H1 (cell line): ENCODE measurements at regions of chr2 and their contacts with region 1.

Region 1: DNA sequence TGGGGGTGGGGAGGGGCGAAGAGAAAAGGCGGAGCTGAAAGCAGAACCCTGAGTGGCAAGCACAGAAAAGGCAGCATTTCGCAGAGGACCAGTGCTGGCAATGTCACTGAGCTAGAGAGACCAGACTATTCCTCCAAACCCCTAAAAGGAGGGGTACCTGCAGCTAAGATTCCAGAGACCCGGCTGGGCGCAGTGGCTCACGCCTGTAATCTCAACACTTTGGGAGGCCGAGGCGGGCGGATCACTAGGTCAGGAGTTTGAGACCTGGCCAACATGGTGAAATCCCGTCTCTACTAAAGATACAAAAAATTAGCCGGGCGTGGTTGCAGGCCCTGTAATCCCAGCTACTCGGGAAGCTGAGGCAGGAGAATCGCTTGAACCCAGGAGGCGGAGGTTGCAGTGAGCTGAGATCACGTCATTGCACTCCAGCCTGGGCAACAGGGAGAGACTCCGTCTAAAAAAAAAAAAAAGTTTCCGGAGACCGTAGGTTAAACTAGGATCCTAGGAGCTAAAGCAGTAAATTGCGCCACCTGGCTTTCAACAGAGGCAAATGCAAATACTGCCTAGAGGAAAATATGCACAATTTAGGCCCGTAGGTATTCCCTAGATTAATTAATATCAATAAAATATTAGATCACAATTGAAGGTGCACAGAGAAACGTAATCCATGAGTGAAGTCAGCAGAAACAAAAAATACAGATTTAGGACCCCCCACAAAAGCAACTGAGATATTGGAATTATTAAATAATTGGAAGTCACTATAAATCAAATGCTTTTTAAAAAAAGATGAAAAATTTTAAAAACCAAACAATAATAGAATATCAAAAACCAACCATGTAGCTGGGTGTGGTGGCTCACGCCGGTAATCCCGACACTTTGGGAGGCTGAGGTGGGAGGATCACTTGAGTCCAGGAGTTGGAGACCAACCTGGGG is 4.9 kb downstream of the UCN start:
- DNase-seq: peak in 1 of 2 experiments; percentile 64
- H3K4me3 ChIP-seq: peak overlapping the region in 1 of 4 experiments; percentile 14; a peak in 1 of 8 replicates
- H3K27ac ChIP-seq: no peak overlapping the region
- H3K4me1 ChIP-seq: peaks cover 0 to 26% (median 13%) of the 10 kb centered on the region in 4 experiments; a peak in 5 of 7 replicates
- H3K27me3 ChIP-seq: peaks cover 29 to 34% (median 32%) of the 10 kb centered on the region in 4 experiments
- CTCF ChIP-seq: peak in 2 of 3 experiments; percentile 74 to 81; a peak in 3 of 4 replicates
- EP300 ChIP-seq: no peak
- POLR2A ChIP-seq: no peak
- RAD21 ChIP-seq: peak; percentile 63 to 70

Region 2: DNA sequence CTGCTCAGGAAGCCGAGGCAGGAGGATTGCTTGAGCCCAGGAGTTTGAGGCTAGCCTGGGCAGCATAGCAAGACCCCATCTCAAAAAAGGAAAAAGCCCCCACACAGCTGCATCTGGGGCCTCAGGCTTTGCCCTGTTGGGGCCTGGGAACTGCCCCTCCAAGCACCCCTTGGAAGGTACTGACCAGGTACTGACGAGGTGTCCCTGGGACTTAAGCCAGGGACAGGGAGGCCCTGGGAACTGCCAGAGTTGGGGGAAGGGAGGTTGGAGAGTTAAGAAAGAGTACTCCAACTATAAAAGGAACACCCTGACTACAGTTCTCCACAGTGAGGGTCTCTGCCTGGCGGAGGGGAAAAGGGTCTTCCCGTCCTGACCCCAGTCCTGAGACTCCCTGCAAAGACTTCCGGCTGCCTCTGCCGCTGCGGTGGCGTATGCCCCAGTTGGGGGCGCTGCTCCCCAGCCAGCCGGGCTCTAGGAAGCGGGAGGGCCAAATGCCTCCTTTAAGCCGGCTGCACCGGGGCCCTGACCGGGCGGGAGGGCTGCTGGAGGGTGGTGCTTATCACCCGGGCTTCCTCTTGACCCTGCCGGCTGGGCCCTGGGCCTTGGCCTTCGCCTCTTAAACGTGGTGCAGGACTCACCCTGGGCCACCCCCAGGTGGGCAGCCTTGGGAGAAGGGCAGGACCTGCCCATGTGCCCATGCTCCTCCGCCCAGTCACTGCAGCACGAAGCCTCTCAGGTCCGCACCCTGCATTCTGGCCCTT is 53.3 kb before region 1 on chr2:
- CTCF ChIA-PET with region 1: interaction called, 116 read pairs
- POLR2A ChIA-PET with region 1: interaction called, 46 read pairs
- DNase-seq: peak; percentile 57 to 93
- H3K4me3 ChIP-seq: peak overlapping the region in 2 of 4 experiments; percentile 30 to 52; a peak in 4 of 8 replicates
- H3K27ac ChIP-seq: no peak overlapping the region
- H3K4me1 ChIP-seq: peaks cover 2 to 11% (median 6%) of the 10 kb centered on the region in 4 experiments
- H3K27me3 ChIP-seq: peaks cover 0 to 6% (median 2%) of the 10 kb centered on the region in 4 experiments; a peak in 5 of 7 replicates
- CTCF ChIP-seq: peak; percentile 86 to 98 (median 93)
- EP300 ChIP-seq: no peak
- POLR2A ChIP-seq: peak in 1 of 2 experiments; percentile 47; a peak in 1 of 3 replicates
- RAD21 ChIP-seq: peak; percentile 95 to 96

Region 3: GRCh38 chr2:27264753-27265535 is 38.4 kb before region 1 on chr2:
- CTCF ChIA-PET with region 1: interaction called, 103 read pairs
- POLR2A ChIA-PET with region 1: no interaction called
- DNase-seq: peak in 1 of 2 experiments; percentile 89
- H3K4me3 ChIP-seq: peak overlapping the region; percentile 57 to 85 (median 62)
- H3K27ac ChIP-seq: no peak overlapping the region
- H3K4me1 ChIP-seq: peaks cover 3 to 19% (median 14%) of the 10 kb centered on the region in 4 experiments
- H3K27me3 ChIP-seq: peaks cover 39 to 69% (median 60%) of the 10 kb centered on the region in 4 experiments
- CTCF ChIP-seq: peak in 2 of 3 experiments; percentile 76 to 88; a peak in 3 of 4 replicates
- EP300 ChIP-seq: no peak
- POLR2A ChIP-seq: peak in 1 of 2 experiments; percentile 63; a peak in 2 of 3 replicates
- RAD21 ChIP-seq: peak; percentile 42 to 63

Region 4: DNA sequence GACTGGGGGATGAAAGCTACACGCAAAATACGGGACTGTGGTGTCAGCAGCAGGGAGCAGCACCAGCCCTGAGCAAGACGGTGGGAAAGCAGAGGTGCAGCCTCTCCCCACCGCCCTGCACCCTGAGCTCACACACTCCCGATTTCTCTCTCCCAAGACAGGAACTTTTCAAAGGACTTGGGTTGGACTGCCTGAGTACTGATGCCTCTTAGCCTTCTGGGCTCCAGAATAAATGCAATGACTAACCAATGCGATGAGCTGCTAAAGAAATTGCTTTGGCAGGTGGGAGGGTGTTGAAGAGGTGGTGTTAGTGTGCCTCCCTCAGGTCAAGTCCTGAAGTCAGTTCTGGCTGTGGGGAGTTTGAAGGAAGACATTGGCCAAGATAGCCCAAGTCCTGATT is 11.5 kb before region 1 on chr2:
- CTCF ChIA-PET with region 1: interaction called, 413 read pairs
- POLR2A ChIA-PET with region 1: interaction called, 10 read pairs
- DNase-seq: no peak
- H3K4me3 ChIP-seq: no peak overlapping the region
- H3K27ac ChIP-seq: no peak overlapping the region
- H3K4me1 ChIP-seq: peaks cover 0 to 4% (median 2%) of the 10 kb centered on the region in 4 experiments; a peak in 3 of 7 replicates
- H3K27me3 ChIP-seq: no peaks in the 10 kb centered on the region; a peak in 1 of 7 replicates
- CTCF ChIP-seq: peak; percentile 59 to 74 (median 70)
- EP300 ChIP-seq: no peak
- POLR2A ChIP-seq: no peak
- RAD21 ChIP-seq: peak; percentile 80 to 87

Region 5: DNA sequence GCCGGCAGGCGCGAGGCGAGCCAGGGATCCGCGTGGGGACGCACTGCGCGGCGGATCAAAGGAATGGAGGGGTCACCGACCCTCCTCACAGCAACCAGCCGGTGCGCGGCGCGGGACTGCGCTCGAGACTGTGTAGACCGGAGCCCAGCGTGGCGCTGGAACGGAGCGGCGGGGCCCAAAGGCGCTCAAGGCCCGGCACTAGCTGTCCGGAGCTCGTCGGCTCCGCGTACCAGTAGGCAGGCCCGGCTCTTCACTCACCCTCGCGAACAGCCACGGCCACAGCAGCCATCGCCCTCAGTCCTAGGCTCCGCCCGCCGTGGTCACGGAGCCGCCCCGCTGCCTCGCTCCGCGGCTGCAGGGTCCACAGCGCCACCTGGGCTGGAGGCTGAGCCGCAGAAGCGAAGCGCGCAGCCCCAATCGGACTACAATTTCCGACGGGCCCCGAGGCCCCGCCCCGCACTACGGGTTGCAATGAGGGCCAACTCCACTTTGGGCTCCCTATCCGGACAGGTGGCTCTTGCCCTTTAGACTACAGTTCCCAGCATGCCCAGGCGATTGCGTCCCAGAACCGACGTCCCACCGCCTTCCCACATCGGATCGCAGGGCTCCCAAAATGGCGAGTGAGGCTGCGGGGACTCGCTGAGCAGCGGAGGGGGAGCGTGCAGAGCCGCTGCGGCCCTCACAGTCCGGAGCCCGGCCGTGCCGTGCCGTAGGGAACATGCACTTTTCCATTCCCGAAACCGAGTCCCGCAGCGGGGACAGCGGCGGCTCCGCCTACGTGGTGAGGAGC is 66.9 kb after region 1 on chr2 and contains the starts of genes EIF2B4 and SNX17:
- CTCF ChIA-PET with region 1: interaction called, 10 read pairs
- POLR2A ChIA-PET with region 1: no interaction called
- DNase-seq: peak; percentile 98 to 99
- H3K4me3 ChIP-seq: peak within 1 kb of the TSS; percentile 72 to 99 (median 88)
- H3K27ac ChIP-seq: peak within 1 kb of the TSS; percentile 62
- H3K4me1 ChIP-seq: peaks cover 0 to 4% (median 2%) of the 10 kb centered on the region in 4 experiments; a peak in 4 of 7 replicates
- H3K27me3 ChIP-seq: no peaks in the 10 kb centered on the region
- CTCF ChIP-seq: peak in 2 of 3 experiments; percentile 71 to 87; a peak in 3 of 4 replicates
- EP300 ChIP-seq: peak in 1 of 2 experiments; percentile 42; a peak in 1 of 3 replicates
- POLR2A ChIP-seq: peak in 1 of 2 experiments; percentile 84; a peak in 2 of 3 replicates
- RAD21 ChIP-seq: peak; percentile 50 to 58; a peak in 3 of 4 replicates
- total RNA-seq, gene EIF2B4: 63.2 and 66.0 TPM in 2 replicates
- total RNA-seq, gene SNX17: 54.9 and 59.1 TPM in 2 replicates

Region 6: GRCh38 chr2:27823569-27823968 is 520.2 kb after region 1 on chr2:
- CTCF ChIA-PET with region 1: no interaction called
- POLR2A ChIA-PET with region 1: no interaction called
- DNase-seq: no peak
- H3K4me3 ChIP-seq: no peak overlapping the region
- H3K27ac ChIP-seq: no peak overlapping the region
- H3K4me1 ChIP-seq: no peaks in the 10 kb centered on the region; a peak in 1 of 7 replicates
- H3K27me3 ChIP-seq: no peaks in the 10 kb centered on the region
- CTCF ChIP-seq: no peak
- EP300 ChIP-seq: no peak
- POLR2A ChIP-seq: no peak
- RAD21 ChIP-seq: peak in 1 of 2 experiments; percentile 10; a peak in 1 of 4 replicates